AG04450 (cell line): ENCODE measurements at regions of chr18 and their contacts with region 1.

Region 1: DNA sequence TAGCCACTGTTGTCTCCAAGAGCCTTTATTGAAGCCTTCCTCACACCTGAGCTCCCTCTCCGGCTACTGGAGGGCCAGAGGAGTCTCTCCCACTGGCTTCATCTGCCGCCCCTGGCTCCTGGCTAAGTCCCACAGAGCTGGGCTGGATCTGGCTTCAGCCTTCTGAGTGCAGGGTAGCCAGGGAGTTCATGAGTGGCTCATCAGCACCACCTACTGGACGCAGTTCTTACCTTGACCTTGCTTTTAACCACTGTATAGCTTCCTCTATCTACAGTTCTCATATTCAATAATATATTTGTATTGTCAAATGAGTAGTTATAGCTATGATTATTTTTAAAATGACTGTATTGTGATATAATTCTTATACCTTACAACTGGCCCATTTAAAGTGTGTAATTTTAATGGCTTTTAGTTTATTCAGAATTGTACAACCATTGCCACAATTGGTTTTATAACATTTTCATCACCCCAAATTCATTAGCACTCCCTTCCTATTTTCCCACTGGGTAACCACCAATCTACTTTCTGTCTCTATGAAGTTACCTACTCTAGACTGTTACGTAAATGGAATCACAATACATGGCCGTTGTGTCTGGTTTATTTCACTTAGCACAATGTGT is 17.7 kb downstream of the CNDP1 start:
- DNase-seq: peak; percentile 54
- H3K4me3 ChIP-seq: no peak overlapping the region
- H3K27ac ChIP-seq: no peak overlapping the region
- H3K27me3 ChIP-seq: peaks cover 9% of the 10 kb centered on the region
- CTCF ChIP-seq: peak; percentile 90

Region 2: DNA sequence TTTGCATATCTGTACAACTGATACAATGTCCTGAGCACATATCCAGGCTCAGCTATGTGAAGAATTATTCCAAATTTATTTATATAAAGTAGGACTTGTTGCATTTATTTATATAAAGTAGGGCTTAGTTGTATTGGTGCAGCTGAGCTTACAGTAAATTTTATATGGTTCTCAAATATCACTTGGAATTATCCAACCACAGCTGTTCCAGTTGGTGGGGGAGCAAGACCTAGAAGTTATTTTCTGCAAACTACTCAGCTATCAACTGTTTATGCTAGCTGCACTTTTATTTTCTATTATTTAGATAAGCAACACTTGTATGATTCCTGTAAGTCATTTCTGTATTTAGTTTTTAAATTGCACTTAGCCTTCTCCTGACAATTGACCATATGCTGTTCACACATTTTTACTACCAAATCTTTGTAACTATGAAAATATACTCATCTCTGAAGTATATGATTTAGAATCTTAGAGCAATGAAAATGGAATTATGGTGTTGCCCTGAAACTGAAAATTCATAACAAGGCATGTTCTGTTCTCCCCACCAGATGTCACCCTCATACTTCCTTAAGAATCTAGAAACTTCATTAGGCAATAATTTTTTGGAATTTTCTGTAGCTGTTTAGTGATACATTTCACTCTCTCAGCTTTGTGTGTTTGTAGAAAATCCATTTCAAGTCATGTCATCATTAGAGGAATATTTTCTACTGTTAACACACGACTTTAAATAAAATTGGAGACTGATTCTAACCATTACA is 1850.9 kb before region 1 on chr18:
- CTCF ChIA-PET with region 1: interaction called, 13 read pairs
- POLR2A ChIA-PET with region 1: no interaction called
- DNase-seq: no peak
- H3K4me3 ChIP-seq: no peak overlapping the region
- H3K27ac ChIP-seq: no peak overlapping the region
- H3K27me3 ChIP-seq: no peaks in the 10 kb centered on the region
- CTCF ChIP-seq: peak; percentile 48

Region 3: GRCh38 chr18:74190086-74190485 is 362.0 kb before region 1 on chr18:
- CTCF ChIA-PET with region 1: interaction called, 13 read pairs
- POLR2A ChIA-PET with region 1: no interaction called
- DNase-seq: peak; percentile 60
- H3K4me3 ChIP-seq: no peak overlapping the region
- H3K27ac ChIP-seq: peak overlapping the region; percentile 75
- H3K27me3 ChIP-seq: peaks cover 3% of the 10 kb centered on the region
- CTCF ChIP-seq: no peak

Region 4: GRCh38 chr18:74342416-74343043 is 209.5 kb before region 1 on chr18:
- CTCF ChIA-PET with region 1: interaction called, 16 read pairs
- POLR2A ChIA-PET with region 1: no interaction called
- DNase-seq: peak; percentile 16
- H3K4me3 ChIP-seq: no peak overlapping the region
- H3K27ac ChIP-seq: no peak overlapping the region
- H3K27me3 ChIP-seq: no peaks in the 10 kb centered on the region
- CTCF ChIP-seq: peak; percentile 60

Region 5: GRCh38 chr18:74370115-74370514 is 181.9 kb before region 1 on chr18:
- CTCF ChIA-PET with region 1: interaction called, 20 read pairs
- POLR2A ChIA-PET with region 1: no interaction called
- DNase-seq: no peak
- H3K4me3 ChIP-seq: no peak overlapping the region
- H3K27ac ChIP-seq: no peak overlapping the region
- H3K27me3 ChIP-seq: peaks cover 17% of the 10 kb centered on the region
- CTCF ChIP-seq: no peak

Region 6: GRCh38 chr18:74541703-74542555 is 10.1 kb before region 1 on chr18:
- CTCF ChIA-PET with region 1: interaction called, 36 read pairs
- POLR2A ChIA-PET with region 1: no interaction called
- DNase-seq: no peak
- H3K4me3 ChIP-seq: no peak overlapping the region
- H3K27ac ChIP-seq: no peak overlapping the region
- H3K27me3 ChIP-seq: peaks cover 11% of the 10 kb centered on the region
- CTCF ChIP-seq: no peak

Region 7: GRCh38 chr18:75248426-75249174 is 696.6 kb after region 1 on chr18:
- CTCF ChIA-PET with region 1: no interaction called
- POLR2A ChIA-PET with region 1: no interaction called
- DNase-seq: no peak
- H3K4me3 ChIP-seq: no peak overlapping the region; the same call in 1 of the 2 replicates
- H3K27ac ChIP-seq: no peak overlapping the region
- H3K27me3 ChIP-seq: no peaks in the 10 kb centered on the region
- CTCF ChIP-seq: no peak